OCI-LY7 (cell line): ENCODE measurements at regions of chr1 and their contacts with region 1.

Region 1: DNA sequence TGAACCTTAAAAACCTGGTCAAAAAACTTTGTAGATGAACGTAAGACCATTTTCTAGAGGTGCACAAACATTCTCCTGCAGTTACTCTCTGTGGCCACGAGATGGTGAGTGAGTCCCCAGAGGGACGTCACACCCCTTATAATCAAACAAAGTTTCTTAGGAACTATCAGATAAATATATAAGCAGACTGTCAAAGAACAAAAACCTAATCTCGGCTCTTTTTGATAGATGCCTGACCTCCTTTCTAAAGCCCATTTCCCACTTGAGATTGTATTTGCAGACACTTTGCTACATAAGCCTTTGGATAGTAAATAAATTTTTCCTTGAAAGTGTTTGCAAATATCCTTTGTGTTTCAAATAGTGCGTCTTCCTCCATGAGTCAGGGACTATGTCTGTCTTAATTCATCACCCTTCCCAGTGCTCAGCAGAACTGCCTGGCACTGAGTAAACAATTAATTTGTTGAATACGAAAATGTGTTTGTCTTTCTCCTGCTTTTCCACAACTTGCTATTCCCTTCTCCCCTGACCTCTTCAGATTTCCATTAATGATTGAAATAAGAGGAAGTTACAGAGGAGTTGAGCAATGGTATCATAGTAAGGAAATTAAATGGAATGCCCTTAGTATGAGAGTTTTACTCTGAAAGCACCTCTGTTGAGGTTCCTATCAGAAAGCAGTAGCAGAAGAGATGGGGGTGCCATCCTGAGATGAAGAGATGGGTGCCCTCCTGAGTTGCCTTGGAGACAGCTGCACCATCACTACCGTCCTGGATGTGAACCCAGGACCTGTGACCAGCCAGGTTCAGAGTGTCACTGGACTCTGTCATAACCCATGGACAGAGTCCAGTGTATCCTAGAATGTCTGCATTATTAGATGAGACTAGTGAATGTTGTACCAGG is 57.8 kb upstream of the RAVER2 start:
- DNase-seq: peak; percentile 45
- H3K4me3 ChIP-seq: no peak overlapping the region
- H3K27ac ChIP-seq: no peak overlapping the region
- H3K4me1 ChIP-seq: no peaks in the 10 kb centered on the region
- CTCF ChIP-seq: peak; percentile 89

Region 2: GRCh38 chr1:64302971-64303370 is 384.1 kb before region 1 on chr1:
- CTCF ChIA-PET with region 1: no interaction called
- POLR2A ChIA-PET with region 1: no interaction called
- intact Hi-C with region 1: no loop called
- DNase-seq: no peak
- H3K4me3 ChIP-seq: no peak overlapping the region
- H3K27ac ChIP-seq: no peak overlapping the region
- H3K4me1 ChIP-seq: no peaks in the 10 kb centered on the region
- CTCF ChIP-seq: no peak

Region 3: DNA sequence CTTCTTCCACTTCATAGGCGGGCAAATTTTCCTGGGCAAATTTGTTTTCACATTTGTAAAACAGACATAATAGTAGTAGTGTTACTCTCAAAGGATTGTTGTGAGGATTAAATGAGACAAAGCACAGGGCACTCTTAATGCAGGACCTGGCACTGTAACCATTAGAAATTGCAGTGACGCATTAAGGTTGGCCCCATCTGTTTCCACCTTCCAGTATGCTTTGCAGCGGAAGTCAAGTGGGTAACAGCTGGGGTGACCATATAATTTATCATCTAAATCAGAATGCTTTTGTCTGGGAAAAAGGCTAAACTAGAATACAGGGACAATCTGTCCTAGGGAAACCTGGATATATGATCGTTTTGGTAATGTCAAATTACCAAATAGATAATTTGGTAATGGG is 349.6 kb before region 1 on chr1:
- CTCF ChIA-PET with region 1: no interaction called
- POLR2A ChIA-PET with region 1: no interaction called
- intact Hi-C with region 1: no loop called
- DNase-seq: no peak
- H3K4me3 ChIP-seq: no peak overlapping the region
- H3K27ac ChIP-seq: no peak overlapping the region
- H3K4me1 ChIP-seq: no peaks in the 10 kb centered on the region
- CTCF ChIP-seq: no peak

Region 4: DNA sequence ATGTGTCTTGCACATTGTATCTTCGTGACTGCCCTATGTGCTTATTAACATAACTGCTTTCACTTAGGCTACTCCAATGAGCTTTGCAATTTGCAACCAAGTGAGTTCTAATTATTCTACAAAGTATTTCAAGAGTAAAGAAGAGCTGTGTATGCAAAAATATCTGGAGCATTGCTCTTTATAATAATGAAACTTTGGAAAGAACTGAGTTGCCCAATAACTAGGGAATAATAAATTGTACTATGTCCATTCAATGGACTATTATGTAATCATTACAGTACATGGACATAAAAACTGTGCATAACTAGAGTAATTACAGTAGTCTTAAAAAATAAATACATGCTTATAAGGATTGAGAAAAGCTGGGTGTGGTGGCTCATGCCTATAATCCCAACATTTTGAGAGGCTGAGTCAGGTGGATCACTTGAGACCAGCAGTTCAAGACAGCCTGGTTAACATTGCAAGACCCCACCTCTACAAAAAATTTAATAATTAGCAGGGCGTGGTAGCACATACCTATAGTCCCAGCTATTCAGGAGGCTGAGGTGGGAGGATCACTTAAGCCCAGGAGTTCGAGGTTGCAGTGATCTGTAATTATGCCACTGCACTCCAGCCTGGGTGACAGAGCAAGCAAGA is 349.6 kb after region 1 on chr1:
- CTCF ChIA-PET with region 1: no interaction called
- POLR2A ChIA-PET with region 1: no interaction called
- intact Hi-C with region 1: loop called (anchors 2 kb)
- DNase-seq: no peak
- H3K4me3 ChIP-seq: no peak overlapping the region
- H3K27ac ChIP-seq: no peak overlapping the region
- H3K4me1 ChIP-seq: peaks cover 6% of the 10 kb centered on the region
- CTCF ChIP-seq: no peak

Region 5: GRCh38 chr1:65075123-65075976 is 388.3 kb after region 1 on chr1:
- CTCF ChIA-PET with region 1: no interaction called
- POLR2A ChIA-PET with region 1: no interaction called
- intact Hi-C with region 1: loop called (anchors 1 kb)
- DNase-seq: peak; percentile 78
- H3K4me3 ChIP-seq: no peak overlapping the region
- H3K27ac ChIP-seq: no peak overlapping the region
- H3K4me1 ChIP-seq: no peaks in the 10 kb centered on the region
- CTCF ChIP-seq: peak; percentile 93